WTC11 (cell line): ENCODE measurements at regions of chr20 and their contacts with region 1.

Region 1: GRCh38 chr20:667391-667964 is 8.1 kb downstream of the SCRT2 start:
- DNase-seq: peak; percentile 87
- ATAC-seq: peak; percentile 54
- H3K4me3 Mint-ChIP-seq: no peak overlapping the region
- H3K27ac Mint-ChIP-seq: no peak overlapping the region
- H3K4me1 Mint-ChIP-seq: peaks cover 49% of the 10 kb centered on the region
- H3K27me3 Mint-ChIP-seq: peaks cover 30% of the 10 kb centered on the region
- CTCF ChIP-seq: peak; percentile 84

Region 2: GRCh38 chr20:561437-562231 is 105.8 kb before region 1 on chr20:
- CTCF ChIA-PET with region 1: interaction called, 20 read pairs
- POLR2A ChIA-PET with region 1: no interaction called
- DNase-seq: peak; percentile 83
- ATAC-seq: peak; percentile 96
- H3K4me3 Mint-ChIP-seq: no peak overlapping the region
- H3K27ac Mint-ChIP-seq: no peak overlapping the region
- H3K4me1 Mint-ChIP-seq: no peaks in the 10 kb centered on the region
- H3K27me3 Mint-ChIP-seq: no peaks in the 10 kb centered on the region
- CTCF ChIP-seq: peak; percentile 88

Region 3: DNA sequence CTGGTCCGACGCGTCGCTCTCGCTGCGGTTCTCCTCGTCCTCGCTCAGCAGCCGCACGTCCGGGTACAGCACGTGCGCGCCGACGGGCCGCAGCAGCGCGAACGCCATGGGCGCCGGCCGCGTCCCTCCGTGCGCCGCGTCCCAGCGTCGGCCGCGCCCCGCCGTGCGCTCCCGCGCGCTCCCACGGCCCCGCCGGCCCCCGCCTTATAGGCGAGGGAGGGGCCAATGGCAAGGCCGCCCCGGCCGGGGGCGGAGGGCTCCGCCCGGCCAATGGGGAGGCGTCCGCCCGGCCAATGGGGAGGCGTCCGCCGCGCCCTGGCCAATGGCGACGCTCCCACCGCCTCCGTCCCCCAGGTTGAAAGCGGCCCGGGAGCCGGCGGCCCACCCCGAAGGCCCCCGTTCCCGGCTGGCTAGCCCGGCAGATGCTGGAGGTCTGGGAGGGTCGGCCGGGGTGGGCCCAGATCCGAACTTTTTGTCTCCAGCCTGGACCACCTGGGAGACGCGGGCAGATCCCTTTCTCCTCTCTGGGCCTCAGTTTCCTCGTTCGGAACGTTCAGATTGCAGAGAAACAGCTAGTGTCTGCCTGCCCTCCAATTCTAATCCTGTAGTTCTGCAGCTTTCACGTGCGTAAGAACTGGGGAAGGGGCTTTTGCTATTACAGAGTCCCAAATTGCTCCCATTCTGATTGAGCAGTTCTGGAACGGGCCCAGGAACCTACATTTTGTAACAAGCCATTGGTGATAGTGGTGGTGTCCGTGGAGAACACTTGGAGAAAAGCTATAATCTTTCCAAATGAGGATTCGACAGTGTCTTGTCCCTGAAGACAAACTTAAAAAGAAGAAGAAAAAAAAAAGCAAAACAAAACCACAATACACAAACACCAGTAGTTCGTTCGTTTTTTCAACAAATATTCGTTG is 57.1 kb before region 1 on chr20 and contains the start of gene TCF15:
- CTCF ChIA-PET with region 1: interaction called, 13 read pairs
- POLR2A ChIA-PET with region 1: no interaction called
- DNase-seq: peak; percentile 73
- ATAC-seq: peak; percentile 92
- H3K4me3 Mint-ChIP-seq: peak within 1 kb of the TSS; percentile 62
- H3K27ac Mint-ChIP-seq: no peak within 1 kb of the TSS
- H3K4me1 Mint-ChIP-seq: peaks cover 13% of the 10 kb centered on the region
- H3K27me3 Mint-ChIP-seq: peaks cover 51% of the 10 kb centered on the region
- CTCF ChIP-seq: no peak
- total RNA-seq, gene TCF15: 3.8 to 5.8 TPM (median 4.6 TPM) in 3 replicates

Region 4: GRCh38 chr20:687468-688203 is 20.2 kb after region 1 on chr20:
- CTCF ChIA-PET with region 1: interaction called, 13 read pairs
- POLR2A ChIA-PET with region 1: no interaction called
- DNase-seq: no peak
- ATAC-seq: no peak
- H3K4me3 Mint-ChIP-seq: no peak overlapping the region
- H3K27ac Mint-ChIP-seq: no peak overlapping the region
- H3K4me1 Mint-ChIP-seq: peaks cover 16% of the 10 kb centered on the region
- H3K27me3 Mint-ChIP-seq: no peaks in the 10 kb centered on the region
- CTCF ChIP-seq: no peak

Region 5: DNA sequence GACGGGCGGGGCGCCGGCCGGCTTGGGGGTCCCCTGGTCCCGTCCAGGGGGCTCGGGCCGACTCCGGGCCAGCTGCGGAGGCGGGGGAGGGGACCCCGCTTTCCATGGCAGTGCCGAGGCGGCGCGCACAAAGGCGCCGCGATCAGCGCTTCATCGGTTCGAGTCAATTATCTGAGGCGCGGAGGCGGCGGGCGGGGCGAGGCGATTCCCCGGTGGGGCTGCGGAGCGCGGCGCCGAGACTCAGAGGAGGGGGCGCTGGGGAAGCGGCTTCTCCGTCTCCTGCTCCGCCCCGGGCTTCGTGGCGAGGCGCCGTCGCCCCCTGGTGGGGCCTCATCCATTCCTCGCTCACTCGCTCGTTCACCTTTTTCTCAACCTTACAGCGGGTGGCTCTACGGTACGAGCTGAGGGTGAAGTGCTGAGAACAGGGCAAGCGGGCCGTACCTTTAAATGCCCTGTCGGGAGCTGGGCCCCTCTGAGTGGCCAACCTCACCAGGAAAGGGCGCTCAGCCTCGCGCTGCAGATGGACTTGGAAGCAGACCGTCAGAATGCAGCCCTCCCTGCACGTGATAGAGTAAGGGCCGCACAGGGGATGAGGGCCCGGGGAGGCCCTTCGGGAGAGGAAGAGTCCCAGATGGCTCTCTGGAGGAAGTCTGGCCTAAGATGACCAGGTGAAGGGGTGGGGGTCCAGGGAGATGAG is 60.9 kb after region 1 on chr20:
- CTCF ChIA-PET with region 1: interaction called, 23 read pairs
- POLR2A ChIA-PET with region 1: no interaction called
- DNase-seq: peak; percentile 88
- ATAC-seq: peak; percentile 89
- H3K4me3 Mint-ChIP-seq: peak overlapping the region; percentile 64
- H3K27ac Mint-ChIP-seq: no peak overlapping the region
- H3K4me1 Mint-ChIP-seq: peaks cover 6% of the 10 kb centered on the region; the same call in 1 of the 2 replicates
- H3K27me3 Mint-ChIP-seq: peaks cover 39% of the 10 kb centered on the region
- CTCF ChIP-seq: peak; percentile 34; the same call in 1 of the 2 replicates

Region 6: DNA sequence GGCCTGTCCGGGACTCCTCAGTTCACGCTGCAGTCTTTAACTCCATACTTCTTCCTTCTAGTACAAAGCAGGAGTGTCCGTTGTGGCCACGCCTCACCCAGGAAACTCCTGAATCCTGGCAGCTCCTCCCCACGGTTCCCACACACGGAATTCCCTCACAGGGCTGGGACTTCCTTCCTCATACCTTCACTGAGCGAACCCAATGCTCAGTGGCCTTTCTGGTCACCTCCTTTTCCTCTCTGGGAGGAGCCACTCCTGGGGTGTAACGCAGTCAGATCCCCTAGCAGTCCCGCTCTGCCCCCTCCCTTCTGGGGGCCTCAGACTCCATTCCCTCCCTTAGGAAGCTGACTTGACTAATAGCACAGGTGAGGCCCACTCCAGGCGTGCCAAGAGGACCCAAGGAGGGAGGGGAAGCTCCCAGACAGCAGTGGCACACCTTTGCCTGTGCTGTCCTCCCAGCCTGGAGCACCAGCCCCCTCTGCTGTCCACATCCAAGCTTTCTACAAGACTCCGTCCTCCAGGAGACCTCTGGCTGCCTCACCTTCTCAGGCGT is 101.0 kb after region 1 on chr20 and contains the start of gene SLC52A3:
- CTCF ChIA-PET with region 1: interaction called, 12 read pairs
- POLR2A ChIA-PET with region 1: no interaction called
- DNase-seq: peak; percentile 73
- ATAC-seq: peak; percentile 96
- H3K4me3 Mint-ChIP-seq: no peak within 1 kb of the TSS
- H3K27ac Mint-ChIP-seq: no peak within 1 kb of the TSS
- H3K4me1 Mint-ChIP-seq: peaks cover 14% of the 10 kb centered on the region
- H3K27me3 Mint-ChIP-seq: no peaks in the 10 kb centered on the region
- CTCF ChIP-seq: no peak
- total RNA-seq, gene SLC52A3: 6.9 to 7.7 TPM (median 7.3 TPM) in 3 replicates

Region 7: GRCh38 chr20:844473-845225 is 177.2 kb after region 1 on chr20:
- CTCF ChIA-PET with region 1: no interaction called
- POLR2A ChIA-PET with region 1: no interaction called
- DNase-seq: peak; percentile 92
- ATAC-seq: peak; percentile 87
- H3K4me3 Mint-ChIP-seq: peak overlapping the region; percentile 70
- H3K27ac Mint-ChIP-seq: no peak overlapping the region
- H3K4me1 Mint-ChIP-seq: peaks cover 44% of the 10 kb centered on the region
- H3K27me3 Mint-ChIP-seq: peaks cover 12% of the 10 kb centered on the region
- CTCF ChIP-seq: no peak